ENCODE measurements at regions of chr21 and their contacts with region 1.

Region 1: GRCh38 chr21:34100790-34101189 is 27.4 kb downstream of the MRPS6 start:
- DNase-seq: no peak
- ATAC-seq: no peak
- H3K4me3 ChIP-seq: no peak overlapping the region
- H3K4me3 Mint-ChIP-seq: no peak overlapping the region
- H3K27ac ChIP-seq: no peak overlapping the region
- H3K27ac Mint-ChIP-seq: peak overlapping the region in 1 of 9 donors; percentile 42
- H3K4me1 ChIP-seq: no peaks in the 10 kb centered on the region
- H3K4me1 Mint-ChIP-seq: peaks cover 22 to 97% (median 83%) of the 10 kb centered on the region in 7 donors
- H3K27me3 ChIP-seq: no peaks in the 10 kb centered on the region
- H3K27me3 Mint-ChIP-seq: no peaks in the 10 kb centered on the region

Region 2: GRCh38 chr21:34113842-34114241 is 13.1 kb after region 1 on chr21:
- CTCF ChIA-PET with region 1: no interaction called
- POLR2A ChIA-PET with region 1: interaction called, 3 read pairs
- intact Hi-C with region 1: loop called in 1 of 2 experiments (anchors 2 kb)
- DNase-seq: no peak
- ATAC-seq: no peak
- H3K4me3 ChIP-seq: no peak overlapping the region
- H3K4me3 Mint-ChIP-seq: peak overlapping the region in 1 of 10 donors; percentile 3
- H3K27ac ChIP-seq: no peak overlapping the region
- H3K27ac Mint-ChIP-seq: peak overlapping the region in 2 of 9 donors; percentile 8 to 22
- H3K4me1 ChIP-seq: no peaks in the 10 kb centered on the region
- H3K4me1 Mint-ChIP-seq: peaks cover 26 to 78% (median 73%) of the 10 kb centered on the region in 7 donors
- H3K27me3 ChIP-seq: no peaks in the 10 kb centered on the region
- H3K27me3 Mint-ChIP-seq: no peaks in the 10 kb centered on the region

Region 3: DNA sequence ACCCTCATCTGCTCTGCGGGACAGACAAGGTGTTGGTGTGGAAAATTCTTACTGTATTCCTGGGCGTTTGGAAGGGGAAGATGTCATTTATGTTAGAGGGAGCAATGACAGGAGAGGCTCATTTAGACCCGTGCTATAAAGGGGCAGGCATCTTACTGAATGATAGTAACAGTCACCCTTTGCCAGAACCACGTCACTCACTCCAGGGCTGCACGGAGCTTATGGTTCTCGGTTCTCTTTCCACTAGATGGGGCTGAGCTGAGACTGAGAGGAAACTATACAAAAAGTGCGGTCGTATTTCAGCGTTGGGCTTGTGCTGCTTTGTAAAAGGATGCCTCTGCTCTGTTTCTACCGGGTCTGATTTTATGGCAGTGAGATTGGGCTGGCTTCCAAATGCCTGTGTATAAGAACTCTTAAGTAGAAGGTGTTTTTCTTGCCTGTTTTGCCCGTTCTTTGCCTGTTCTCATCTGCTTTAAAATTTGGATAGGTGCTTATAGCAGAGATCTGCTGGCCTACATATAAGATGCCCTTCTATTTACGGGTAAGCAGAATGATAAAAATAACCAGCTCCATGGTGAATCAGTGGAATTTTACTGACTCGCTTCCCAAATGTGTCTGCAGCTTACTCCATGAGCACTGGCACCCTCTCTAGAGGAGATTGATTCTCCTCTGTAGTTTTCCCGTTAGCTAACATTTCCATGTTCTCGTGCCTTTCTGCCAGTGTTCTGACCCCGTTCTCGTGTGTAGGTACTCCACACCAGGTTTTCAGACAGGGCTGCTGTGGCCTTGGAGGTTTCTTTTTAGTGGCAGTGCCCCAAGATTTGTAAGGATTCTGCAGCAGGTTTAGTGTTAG is 28.5 kb after region 1 on chr21:
- CTCF ChIA-PET with region 1: no interaction called
- POLR2A ChIA-PET with region 1: no interaction called
- intact Hi-C with region 1: no loop called
- DNase-seq: peak; percentile 9 to 86 (median 78)
- ATAC-seq: peak; percentile 92
- H3K4me3 ChIP-seq: peak overlapping the region; percentile 22
- H3K4me3 Mint-ChIP-seq: peak overlapping the region; percentile 64 to 82 (median 76)
- H3K27ac ChIP-seq: peak overlapping the region; percentile 64
- H3K27ac Mint-ChIP-seq: peak overlapping the region; percentile 72 to 97 (median 90)
- H3K4me1 ChIP-seq: peaks cover 4 to 67% of the 10 kb centered on the region in 2 donors
- H3K4me1 Mint-ChIP-seq: peaks cover 69 to 99% (median 95%) of the 10 kb centered on the region in 7 donors
- H3K27me3 ChIP-seq: no peaks in the 10 kb centered on the region
- H3K27me3 Mint-ChIP-seq: no peaks in the 10 kb centered on the region

Region 4: DNA sequence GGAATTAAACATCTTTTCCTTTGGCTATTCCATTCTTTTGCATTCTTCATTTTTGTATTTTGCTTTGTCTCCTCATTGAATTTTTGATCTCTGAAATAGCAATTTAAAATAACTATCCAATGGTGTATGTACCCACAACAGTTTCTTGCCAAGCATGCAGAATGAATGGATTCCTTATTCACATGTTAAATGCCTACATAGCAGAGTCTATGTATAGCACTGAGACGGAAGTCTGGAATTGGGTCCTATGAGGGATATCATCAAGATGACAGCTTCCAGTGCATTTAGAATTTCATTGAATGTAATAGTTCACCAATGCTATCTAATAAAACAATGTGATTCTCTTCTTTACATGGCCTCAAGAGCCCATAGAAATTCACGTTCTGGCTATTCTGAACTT is 70.1 kb after region 1 on chr21:
- CTCF ChIA-PET with region 1: no interaction called
- POLR2A ChIA-PET with region 1: no interaction called
- intact Hi-C with region 1: no loop called
- DNase-seq: no peak
- ATAC-seq: no peak
- H3K4me3 ChIP-seq: no peak overlapping the region
- H3K4me3 Mint-ChIP-seq: no peak overlapping the region
- H3K27ac ChIP-seq: no peak overlapping the region
- H3K27ac Mint-ChIP-seq: no peak overlapping the region
- H3K4me1 ChIP-seq: no peaks in the 10 kb centered on the region
- H3K4me1 Mint-ChIP-seq: no peaks in the 10 kb centered on the region
- H3K27me3 ChIP-seq: no peaks in the 10 kb centered on the region
- H3K27me3 Mint-ChIP-seq: no peaks in the 10 kb centered on the region